IMR-90 (cell line): ENCODE measurements at regions of chr3 and their contacts with region 1.

Region 1: DNA sequence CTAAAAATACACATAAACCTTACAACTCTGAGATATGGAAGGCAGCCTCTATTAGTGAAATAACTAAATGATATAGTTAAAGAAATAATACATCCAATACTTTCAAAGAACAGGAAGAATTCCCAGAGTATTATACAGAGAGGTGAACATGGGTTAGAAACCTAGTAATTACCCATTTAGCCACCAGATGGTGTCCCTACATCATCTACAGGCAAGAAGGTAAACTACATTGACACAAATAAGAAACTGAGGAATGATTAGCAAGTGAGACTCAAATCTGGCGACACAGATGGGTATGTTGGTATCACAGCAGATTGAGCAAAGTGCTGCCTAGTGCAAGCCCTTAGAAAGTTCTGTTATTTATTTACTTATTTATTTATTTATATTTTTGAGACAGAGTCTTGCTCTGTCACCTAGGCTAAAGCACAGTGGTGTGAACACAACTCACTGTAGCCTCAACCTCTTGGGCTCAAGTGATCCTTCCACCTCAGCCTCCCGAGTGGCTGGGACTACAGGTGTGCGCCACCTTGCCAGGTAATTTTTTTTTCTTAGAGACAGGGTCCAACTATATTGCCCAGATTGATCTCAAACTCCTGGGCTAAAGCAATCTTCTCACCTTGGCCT is 28.2 kb downstream of the NEK4 start:
- DNase-seq: peak; percentile 34
- ATAC-seq: peak; percentile 71
- H3K4me3 ChIP-seq: no peak overlapping the region
- H3K27ac ChIP-seq: no peak overlapping the region
- H3K4me1 ChIP-seq: no peaks in the 10 kb centered on the region
- H3K27me3 ChIP-seq: no peaks in the 10 kb centered on the region
- CTCF ChIP-seq: peak; percentile 68
- POLR2A ChIP-seq: no peak
- RAD21 ChIP-seq: peak; percentile 79

Region 2: GRCh38 chr3:52820736-52821135 is 78.2 kb after region 1 on chr3:
- CTCF ChIA-PET with region 1: interaction called, 4 read pairs
- POLR2A ChIA-PET with region 1: no interaction called
- dilution Hi-C with region 1: no loop called
- in situ Hi-C with region 1: no loop called
- intact Hi-C with region 1: loop called (anchors 1 kb)
- DNase-seq: peak; percentile 6
- ATAC-seq: peak; percentile 75
- H3K4me3 ChIP-seq: no peak overlapping the region
- H3K27ac ChIP-seq: no peak overlapping the region
- H3K4me1 ChIP-seq: no peaks in the 10 kb centered on the region
- H3K27me3 ChIP-seq: peaks cover 3% of the 10 kb centered on the region; the same call in 1 of the 2 replicates
- CTCF ChIP-seq: peak; percentile 52
- POLR2A ChIP-seq: no peak
- RAD21 ChIP-seq: peak; percentile 39

Region 3: DNA sequence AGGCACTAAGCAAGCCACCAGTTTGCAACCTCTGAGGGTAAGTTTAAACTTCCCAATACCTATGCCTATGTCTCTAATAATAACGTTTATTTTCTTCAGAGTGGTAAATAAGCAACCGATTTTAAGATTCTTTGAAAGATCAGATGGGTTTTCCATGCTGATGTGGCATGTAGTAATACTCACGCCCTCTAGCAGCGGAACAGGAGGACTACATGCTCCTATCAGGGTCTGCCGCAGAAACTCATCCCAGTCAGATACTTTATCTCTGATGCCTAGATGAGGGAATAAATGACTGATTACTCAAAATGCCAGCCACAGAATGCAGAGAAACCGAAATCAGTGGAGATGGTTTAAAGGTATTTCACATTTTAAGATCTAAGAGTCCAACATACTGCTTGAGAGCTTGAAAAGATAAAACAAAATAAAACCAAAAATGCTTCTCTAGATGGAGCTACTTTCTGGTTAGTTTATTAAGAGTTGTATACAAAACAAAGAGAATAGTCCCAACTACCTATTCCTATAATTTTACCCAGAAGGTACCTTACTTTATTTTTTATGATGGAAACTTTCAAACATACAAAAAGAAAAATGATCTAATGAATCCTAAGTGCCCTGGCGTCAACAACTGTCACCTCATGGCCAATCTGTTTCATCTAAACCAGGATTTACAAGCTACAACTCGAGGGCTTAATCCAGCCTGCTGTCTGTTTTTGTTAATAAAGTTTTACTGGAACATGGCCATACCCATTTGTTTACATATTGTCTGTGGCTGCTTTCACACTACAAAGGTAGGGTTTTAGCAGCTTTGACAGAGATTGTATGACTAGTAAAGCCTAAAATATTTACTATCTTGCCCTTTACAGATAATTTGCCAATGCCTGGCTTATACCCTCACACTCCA is 192.3 kb after region 1 on chr3:
- CTCF ChIA-PET with region 1: no interaction called
- POLR2A ChIA-PET with region 1: no interaction called
- dilution Hi-C with region 1: no loop called
- in situ Hi-C with region 1: no loop called
- intact Hi-C with region 1: loop called (anchors 2 kb)
- DNase-seq: peak; percentile 64
- ATAC-seq: peak; percentile 97
- H3K4me3 ChIP-seq: no peak overlapping the region
- H3K27ac ChIP-seq: no peak overlapping the region
- H3K4me1 ChIP-seq: no peaks in the 10 kb centered on the region
- H3K27me3 ChIP-seq: no peaks in the 10 kb centered on the region
- CTCF ChIP-seq: peak; percentile 71
- POLR2A ChIP-seq: no peak
- RAD21 ChIP-seq: peak; percentile 66

Region 4: GRCh38 chr3:52986938-52987337 is 244.4 kb after region 1 on chr3:
- CTCF ChIA-PET with region 1: interaction called, 3 read pairs
- POLR2A ChIA-PET with region 1: no interaction called
- dilution Hi-C with region 1: no loop called
- in situ Hi-C with region 1: no loop called
- intact Hi-C with region 1: loop called (anchors 5 kb)
- DNase-seq: peak; percentile 70
- ATAC-seq: peak; percentile 68
- H3K4me3 ChIP-seq: no peak overlapping the region
- H3K27ac ChIP-seq: no peak overlapping the region
- H3K4me1 ChIP-seq: no peaks in the 10 kb centered on the region
- H3K27me3 ChIP-seq: no peaks in the 10 kb centered on the region
- CTCF ChIP-seq: peak; percentile 67
- POLR2A ChIP-seq: no peak
- RAD21 ChIP-seq: peak; percentile 81

Region 5: GRCh38 chr3:53072653-53073552 is 330.4 kb after region 1 on chr3:
- CTCF ChIA-PET with region 1: no interaction called
- POLR2A ChIA-PET with region 1: no interaction called
- dilution Hi-C with region 1: no loop called
- in situ Hi-C with region 1: loop called (anchors 10 kb)
- intact Hi-C with region 1: loop called (anchors 1 kb)
- DNase-seq: peak; percentile 63
- ATAC-seq: peak; percentile 97
- H3K4me3 ChIP-seq: no peak overlapping the region
- H3K27ac ChIP-seq: no peak overlapping the region
- H3K4me1 ChIP-seq: peaks cover 3% of the 10 kb centered on the region; the same call in 1 of the 2 replicates
- H3K27me3 ChIP-seq: peaks cover 2% of the 10 kb centered on the region; the same call in 1 of the 2 replicates
- CTCF ChIP-seq: peak; percentile 81
- POLR2A ChIP-seq: no peak
- RAD21 ChIP-seq: peak; percentile 82